ENCODE measurements at regions of chr3 and their contacts with region 1.

Region 1: GRCh38 chr3:58630076-58630709 is 36.4 kb downstream of the FAM3D start:
- DNase-seq: peak; percentile 57 to 74
- H3K4me3 ChIP-seq: no peak overlapping the region
- H3K27ac ChIP-seq: peak overlapping the region; percentile 48 to 74
- H3K4me1 ChIP-seq: peaks cover 0 to 11% of the 10 kb centered on the region in 2 donors
- H3K27me3 ChIP-seq: no peaks in the 10 kb centered on the region
- CTCF ChIP-seq: peak; percentile 88 to 92 (median 90)
- POLR2A ChIP-seq: no peak

Region 2: GRCh38 chr3:58073301-58074108 is 556.7 kb before region 1 on chr3:
- intact Hi-C with region 1: no loop called
- DNase-seq: no peak
- H3K4me3 ChIP-seq: no peak overlapping the region
- H3K27ac ChIP-seq: peak overlapping the region; percentile 74 to 89
- H3K4me1 ChIP-seq: peaks cover 8 to 9% of the 10 kb centered on the region in 2 donors
- H3K27me3 ChIP-seq: no peaks in the 10 kb centered on the region
- CTCF ChIP-seq: no peak
- POLR2A ChIP-seq: no peak

Region 3: GRCh38 chr3:58135712-58136543 is 494.3 kb before region 1 on chr3:
- intact Hi-C with region 1: no loop called
- DNase-seq: no peak
- H3K4me3 ChIP-seq: no peak overlapping the region
- H3K27ac ChIP-seq: peak overlapping the region; percentile 42 to 65
- H3K4me1 ChIP-seq: no peaks in the 10 kb centered on the region
- H3K27me3 ChIP-seq: no peaks in the 10 kb centered on the region
- CTCF ChIP-seq: peak in 1 of 4 experiments; percentile 30
- POLR2A ChIP-seq: no peak

Region 4: GRCh38 chr3:58324391-58325390 is 305.5 kb before region 1 on chr3:
- intact Hi-C with region 1: loop called (anchors 10 kb)
- DNase-seq: no peak
- H3K4me3 ChIP-seq: no peak overlapping the region
- H3K27ac ChIP-seq: peak overlapping the region in 1 of 2 donors; percentile 29
- H3K4me1 ChIP-seq: no peaks in the 10 kb centered on the region
- H3K27me3 ChIP-seq: no peaks in the 10 kb centered on the region
- CTCF ChIP-seq: no peak
- POLR2A ChIP-seq: no peak

Region 5: GRCh38 chr3:58568572-58569286 is 61.5 kb before region 1 on chr3:
- intact Hi-C with region 1: loop called (anchors 10 kb)
- DNase-seq: peak; percentile 68 to 71
- H3K4me3 ChIP-seq: no peak overlapping the region
- H3K27ac ChIP-seq: no peak overlapping the region
- H3K4me1 ChIP-seq: no peaks in the 10 kb centered on the region
- H3K27me3 ChIP-seq: no peaks in the 10 kb centered on the region
- CTCF ChIP-seq: peak; percentile 80 to 88 (median 84)
- POLR2A ChIP-seq: no peak